ENCODE measurements at regions of chr4 and their contacts with region 1.

Region 1: DNA sequence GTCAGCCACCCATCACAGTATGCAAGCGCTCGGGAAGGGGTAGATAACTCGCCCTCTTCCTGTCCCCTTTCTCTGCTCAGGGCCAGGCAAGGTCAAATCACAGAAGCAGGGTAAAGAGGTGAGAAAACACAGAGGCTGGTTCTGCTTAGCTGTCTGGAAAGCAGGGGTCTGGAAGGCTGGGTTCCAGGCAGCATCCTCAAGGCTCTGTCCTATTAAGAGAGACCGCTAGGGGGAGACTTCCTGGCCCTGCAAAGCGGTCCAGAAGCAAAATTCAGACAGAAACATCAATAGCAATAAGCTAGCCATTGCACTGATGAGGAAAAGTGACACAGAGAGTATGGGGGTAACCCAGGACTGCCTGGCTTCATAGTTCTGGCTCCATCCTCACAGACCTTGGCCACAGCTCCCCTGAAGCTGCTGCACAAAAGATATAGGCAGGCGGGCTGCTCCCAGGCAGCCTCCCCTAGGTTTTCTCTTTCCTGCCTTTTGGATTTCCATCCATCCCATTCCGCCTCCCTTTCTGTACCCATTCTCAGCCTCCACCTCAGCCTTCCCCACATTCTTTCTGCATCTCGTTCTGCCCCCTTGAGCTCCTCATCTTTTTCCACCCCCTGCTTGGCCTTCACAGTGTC is 308.5 kb downstream of the EVC2 start:
- DNase-seq: peak; percentile 8
- ATAC-seq: peak; percentile 77
- H3K4me3 ChIP-seq: no peak overlapping the region
- H3K27ac ChIP-seq: no peak overlapping the region
- H3K4me1 ChIP-seq: no peaks in the 10 kb centered on the region
- H3K27me3 ChIP-seq: peaks cover 25% of the 10 kb centered on the region
- CTCF ChIP-seq: peak; percentile 47 to 85 (median 75); a peak in 5 of 6 replicates
- POLR2A ChIP-seq: no peak
- RAD21 ChIP-seq: peak; percentile 48

Region 2: GRCh38 chr4:5409972-5410618 is 10.2 kb after region 1 on chr4:
- CTCF ChIA-PET with region 1: interaction called, 10 read pairs
- POLR2A ChIA-PET with region 1: no interaction called
- RAD21 ChIA-PET with region 1: no interaction called
- intact Hi-C with region 1: no loop called
- DNase-seq: no peak
- ATAC-seq: peak; percentile 65
- H3K4me3 ChIP-seq: no peak overlapping the region
- H3K27ac ChIP-seq: no peak overlapping the region
- H3K4me1 ChIP-seq: no peaks in the 10 kb centered on the region
- H3K27me3 ChIP-seq: peaks cover 9% of the 10 kb centered on the region
- CTCF ChIP-seq: 0 out of 6 replicates have a peak, but pooled peaks of 2 of the 3 experiments have one; percentile 14 to 18
- POLR2A ChIP-seq: no peak
- RAD21 ChIP-seq: no peak